Activated naive CD4-positive, alpha-beta T cell treated with anti-CD3 and anti-CD28 coated beads for 36 hours (primary cell): ENCODE measurements at regions of chr4 and their contacts with region 1.

Region 1: GRCh38 chr4:127965062-127965802 is at the starts of genes ABHD18 and MFSD8:
- DNase-seq: peak; percentile 99
- H3K4me3 Mint-ChIP-seq: peak within 1 kb of the TSS; percentile 93
- H3K27ac Mint-ChIP-seq: peak within 1 kb of the TSS; percentile 96
- H3K4me1 Mint-ChIP-seq: peaks cover 32% of the 10 kb centered on the region
- H3K27me3 Mint-ChIP-seq: no peaks in the 10 kb centered on the region
- total RNA-seq, gene ABHD18: 17.0 to 17.5 TPM
- total RNA-seq, gene MFSD8: 11.1 to 11.2 TPM

Region 2: GRCh38 chr4:127604949-127605709 is 360.1 kb before region 1 on chr4:
- CTCF ChIA-PET with region 1: no interaction called
- intact Hi-C with region 1: loop called (anchors 10 kb)
- DNase-seq: no peak
- H3K4me3 Mint-ChIP-seq: no peak overlapping the region
- H3K27ac Mint-ChIP-seq: no peak overlapping the region
- H3K4me1 Mint-ChIP-seq: no peaks in the 10 kb centered on the region
- H3K27me3 Mint-ChIP-seq: peaks cover 21% of the 10 kb centered on the region

Region 3: DNA sequence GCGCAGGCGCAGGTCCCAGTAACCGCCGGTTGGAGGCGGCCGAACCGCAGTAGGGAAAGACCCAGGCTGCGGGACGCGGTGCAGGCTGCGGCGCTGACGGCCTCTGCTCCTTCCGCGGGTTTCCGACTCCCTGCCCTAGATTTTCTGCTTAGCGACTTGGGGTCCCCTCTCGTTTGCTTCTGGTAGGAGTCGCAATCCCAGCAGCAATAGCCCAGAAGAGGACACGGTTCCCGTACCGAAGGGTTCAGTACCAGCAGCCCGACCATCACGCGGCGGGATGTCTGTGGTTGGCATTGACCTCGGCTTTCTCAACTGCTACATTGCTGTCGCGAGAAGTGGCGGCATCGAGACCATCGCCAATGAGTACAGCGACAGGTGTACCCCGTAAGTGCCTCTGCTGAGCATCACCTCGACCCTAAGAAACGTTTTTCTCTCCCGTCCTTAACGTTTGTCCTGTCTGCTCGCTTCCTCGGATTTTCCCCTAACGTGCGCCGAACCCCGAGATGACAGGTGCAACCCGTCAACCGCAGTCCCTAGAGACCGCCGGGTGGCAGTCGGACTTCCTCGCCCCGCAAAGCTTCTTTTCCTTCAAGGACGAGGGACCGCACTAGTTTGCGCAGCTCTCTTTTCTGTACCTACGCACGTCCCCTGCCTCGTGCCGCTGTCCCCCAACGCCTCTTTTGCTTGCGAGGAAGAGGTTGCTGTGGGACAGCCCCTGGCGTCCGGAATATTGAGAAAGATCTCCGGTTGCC is 182.8 kb before region 1 on chr4 and contains the start of gene HSPA4L:
- CTCF ChIA-PET with region 1: no interaction called
- intact Hi-C with region 1: loop called (anchors 1 kb)
- DNase-seq: peak; percentile 78
- H3K4me3 Mint-ChIP-seq: peak within 1 kb of the TSS; percentile 86
- H3K27ac Mint-ChIP-seq: peak within 1 kb of the TSS; percentile 80
- H3K4me1 Mint-ChIP-seq: peaks cover 17% of the 10 kb centered on the region
- H3K27me3 Mint-ChIP-seq: peaks cover 56% of the 10 kb centered on the region
- total RNA-seq, gene HSPA4L: 2.6 to 2.8 TPM

Region 4: GRCh38 chr4:127880764-127881562 is 84.3 kb before region 1 on chr4 and contains the start of gene PLK4:
- CTCF ChIA-PET with region 1: interaction called, 4 read pairs
- intact Hi-C with region 1: loop called (anchors 1 kb)
- DNase-seq: peak; percentile 97
- H3K4me3 Mint-ChIP-seq: peak within 1 kb of the TSS; percentile 98
- H3K27ac Mint-ChIP-seq: peak within 1 kb of the TSS; percentile 98
- H3K4me1 Mint-ChIP-seq: peaks cover 18% of the 10 kb centered on the region
- H3K27me3 Mint-ChIP-seq: peaks cover 3% of the 10 kb centered on the region
- total RNA-seq, gene PLK4: 44.7 to 52.3 TPM

Region 5: DNA sequence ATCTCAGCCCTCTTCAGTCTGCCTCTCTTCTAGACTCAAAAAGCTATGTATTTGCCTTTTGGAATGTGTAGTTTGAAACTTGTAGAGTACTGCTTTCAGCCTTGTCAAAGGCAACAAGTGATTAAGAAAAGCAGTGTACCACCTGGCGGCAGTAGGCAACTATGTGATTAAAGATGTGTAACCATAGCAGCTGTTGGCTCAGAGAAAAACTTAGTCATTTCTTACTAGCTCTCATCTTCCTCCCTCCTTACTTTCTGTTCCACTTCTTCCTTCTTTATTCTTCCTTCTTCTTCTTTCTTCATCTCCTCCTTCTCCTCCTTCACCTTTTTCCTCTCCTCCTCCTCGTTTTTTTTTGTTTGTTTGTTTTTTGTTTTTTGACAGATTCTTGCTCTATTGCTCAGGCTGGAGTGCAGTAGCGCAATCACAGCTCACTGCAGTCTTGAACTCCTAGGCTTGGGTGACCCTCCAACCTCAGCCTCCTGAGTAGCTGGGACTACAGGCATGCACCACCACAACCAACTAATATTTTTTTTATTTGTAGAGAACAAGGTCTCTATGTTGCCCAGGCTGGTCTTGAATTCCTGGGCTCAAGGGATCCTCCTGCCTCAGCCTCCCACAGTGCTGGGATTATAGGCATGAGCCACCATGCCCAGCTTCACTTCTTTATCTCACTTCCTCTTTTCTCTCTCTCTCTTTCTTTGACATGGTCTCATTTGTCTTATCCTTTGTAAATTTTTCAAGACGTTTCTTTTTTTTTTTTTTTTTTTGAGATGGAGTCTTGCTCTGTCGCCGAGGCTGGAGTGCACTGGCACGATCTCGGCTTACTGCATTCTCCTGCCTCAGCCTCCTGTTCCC is 32.5 kb after region 1 on chr4:
- CTCF ChIA-PET with region 1: interaction called, 3 read pairs
- intact Hi-C with region 1: loop called (anchors 1 kb)
- DNase-seq: peak; percentile 67
- H3K4me3 Mint-ChIP-seq: no peak overlapping the region
- H3K27ac Mint-ChIP-seq: peak overlapping the region; percentile 62
- H3K4me1 Mint-ChIP-seq: peaks cover 32% of the 10 kb centered on the region
- H3K27me3 Mint-ChIP-seq: no peaks in the 10 kb centered on the region

Region 6: DNA sequence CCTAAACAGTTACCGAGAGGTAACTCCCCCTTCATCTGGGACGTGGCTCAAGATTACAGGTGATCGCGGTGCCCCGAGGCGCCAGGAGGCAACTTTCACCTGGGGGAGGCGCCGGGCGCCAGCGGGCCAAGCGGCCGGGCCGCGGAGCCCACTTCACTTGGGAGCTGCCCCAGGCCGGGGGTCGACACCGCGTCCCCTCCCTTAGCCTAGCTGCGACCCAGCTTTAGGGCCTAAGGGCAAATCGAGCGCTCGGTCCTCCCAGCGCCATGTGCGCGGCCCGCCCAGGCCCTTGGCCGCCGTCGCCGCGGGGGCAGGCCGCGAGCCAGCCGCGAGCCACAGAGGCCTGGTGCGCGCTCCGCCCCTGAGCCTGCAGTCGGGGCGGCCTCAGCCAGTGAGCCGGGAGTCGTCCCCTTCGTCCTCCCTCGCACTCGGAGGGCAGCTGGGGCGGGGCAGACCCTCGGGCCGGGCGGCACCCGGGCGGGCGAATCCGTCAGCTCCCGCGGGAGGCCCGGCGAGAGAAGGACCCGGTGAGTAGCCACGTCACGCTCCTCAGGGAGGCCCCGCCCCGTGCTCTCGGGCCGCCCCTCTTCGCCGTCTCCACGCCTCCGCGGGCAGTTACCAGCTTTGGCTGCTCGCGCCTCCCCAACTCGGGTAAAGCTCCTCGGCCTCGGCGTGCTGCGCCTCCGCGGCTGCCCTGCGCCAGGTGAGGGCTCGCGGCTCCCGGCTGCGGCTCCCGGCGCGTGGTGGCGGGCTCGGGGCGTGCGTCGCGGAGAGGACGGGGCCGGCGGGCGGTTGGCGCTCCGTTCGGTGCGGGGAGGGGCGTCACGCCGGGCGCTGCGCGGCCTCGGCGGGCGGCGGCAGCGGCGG is 95.7 kb after region 1 on chr4 and contains the start of gene LARP1B:
- CTCF ChIA-PET with region 1: no interaction called
- intact Hi-C with region 1: loop called (anchors 1 kb)
- DNase-seq: peak; percentile 94
- H3K4me3 Mint-ChIP-seq: peak within 1 kb of the TSS; percentile 82
- H3K27ac Mint-ChIP-seq: peak within 1 kb of the TSS; percentile 81
- H3K4me1 Mint-ChIP-seq: peaks cover 16% of the 10 kb centered on the region
- H3K27me3 Mint-ChIP-seq: no peaks in the 10 kb centered on the region
- total RNA-seq, gene LARP1B: 17.6 to 18.9 TPM

Region 7: GRCh38 chr4:128517739-128518510 is 552.7 kb after region 1 on chr4:
- CTCF ChIA-PET with region 1: no interaction called
- intact Hi-C with region 1: loop called (anchors 5 kb)
- DNase-seq: peak; percentile 8
- H3K4me3 Mint-ChIP-seq: no peak overlapping the region
- H3K27ac Mint-ChIP-seq: no peak overlapping the region
- H3K4me1 Mint-ChIP-seq: peaks cover 12% of the 10 kb centered on the region
- H3K27me3 Mint-ChIP-seq: peaks cover 2% of the 10 kb centered on the region